ENCODE measurements at regions of chr2 and their contacts with region 1.

Region 1: GRCh38 chr2:211737282-211737681 is 801.3 kb downstream of the ERBB4 start:
- DNase-seq: no peak
- ATAC-seq: no peak
- H3K4me3 ChIP-seq: no peak overlapping the region
- H3K4me3 Mint-ChIP-seq: no peak overlapping the region
- H3K27ac ChIP-seq: no peak overlapping the region
- H3K27ac Mint-ChIP-seq: no peak overlapping the region
- H3K4me1 ChIP-seq: no peaks in the 10 kb centered on the region
- H3K4me1 Mint-ChIP-seq: no peaks in the 10 kb centered on the region
- H3K27me3 ChIP-seq: no peaks in the 10 kb centered on the region
- H3K27me3 Mint-ChIP-seq: no peaks in the 10 kb centered on the region

Region 2: DNA sequence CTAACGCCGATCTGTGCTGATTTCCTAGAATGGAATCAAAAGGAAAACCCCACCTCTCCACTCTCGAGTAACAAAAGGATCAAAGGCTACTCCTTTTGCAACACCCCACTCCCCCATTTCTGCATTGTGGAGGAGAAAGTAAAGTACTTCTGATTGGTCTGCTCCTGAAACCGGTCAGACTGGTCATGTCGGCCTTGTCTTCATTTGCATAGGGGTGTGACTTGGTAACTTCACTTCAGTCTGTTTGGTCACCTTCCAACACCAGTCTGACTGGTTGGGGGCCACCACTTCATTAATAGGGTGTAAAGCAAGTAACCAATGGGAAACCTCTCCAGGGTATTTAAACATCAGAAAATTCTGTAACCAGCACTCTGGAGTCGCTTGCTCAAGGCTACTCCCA is 29.4 kb after region 1 on chr2:
- CTCF ChIA-PET with region 1: no interaction called
- POLR2A ChIA-PET with region 1: no interaction called
- DNase-seq: no peak
- ATAC-seq: no peak
- H3K4me3 ChIP-seq: no peak overlapping the region
- H3K4me3 Mint-ChIP-seq: no peak overlapping the region
- H3K27ac ChIP-seq: no peak overlapping the region
- H3K27ac Mint-ChIP-seq: no peak overlapping the region
- H3K4me1 ChIP-seq: no peaks in the 10 kb centered on the region
- H3K4me1 Mint-ChIP-seq: no peaks in the 10 kb centered on the region
- H3K27me3 ChIP-seq: no peaks in the 10 kb centered on the region
- H3K27me3 Mint-ChIP-seq: no peaks in the 10 kb centered on the region

Region 3: DNA sequence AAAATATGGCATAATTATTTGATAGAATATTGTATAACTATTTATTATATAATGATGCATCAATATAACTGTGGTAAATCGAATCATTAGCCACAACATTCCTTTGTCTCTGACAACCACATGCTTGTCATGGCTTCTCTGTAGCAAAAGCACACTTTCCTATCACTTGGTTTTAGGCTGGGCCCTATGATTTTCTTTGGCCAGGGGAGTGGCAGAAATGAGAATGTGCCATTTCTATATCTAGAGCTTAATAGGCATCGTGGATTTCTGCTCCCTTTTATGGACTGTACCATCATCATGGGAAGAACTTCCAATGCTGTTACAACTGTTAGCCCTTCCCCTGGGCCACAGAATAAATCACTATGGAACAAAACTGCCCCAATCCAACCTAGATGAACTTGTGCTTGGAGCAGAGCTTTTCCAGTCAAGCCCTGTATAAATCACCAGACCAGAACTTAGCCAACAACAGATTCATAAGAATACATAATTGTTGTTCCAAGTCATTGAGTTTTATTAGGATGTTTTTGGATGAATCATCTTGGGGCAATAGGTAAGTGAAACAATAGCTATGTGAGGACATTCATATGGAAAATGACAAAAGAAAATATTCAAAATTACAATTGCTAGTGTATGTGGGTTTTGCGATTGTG is 85.5 kb after region 1 on chr2:
- CTCF ChIA-PET with region 1: no interaction called
- POLR2A ChIA-PET with region 1: no interaction called
- DNase-seq: no peak
- ATAC-seq: no peak
- H3K4me3 ChIP-seq: no peak overlapping the region
- H3K4me3 Mint-ChIP-seq: no peak overlapping the region
- H3K27ac ChIP-seq: no peak overlapping the region
- H3K27ac Mint-ChIP-seq: no peak overlapping the region
- H3K4me1 ChIP-seq: no peaks in the 10 kb centered on the region
- H3K4me1 Mint-ChIP-seq: no peaks in the 10 kb centered on the region
- H3K27me3 ChIP-seq: no peaks in the 10 kb centered on the region
- H3K27me3 Mint-ChIP-seq: no peaks in the 10 kb centered on the region

Region 4: DNA sequence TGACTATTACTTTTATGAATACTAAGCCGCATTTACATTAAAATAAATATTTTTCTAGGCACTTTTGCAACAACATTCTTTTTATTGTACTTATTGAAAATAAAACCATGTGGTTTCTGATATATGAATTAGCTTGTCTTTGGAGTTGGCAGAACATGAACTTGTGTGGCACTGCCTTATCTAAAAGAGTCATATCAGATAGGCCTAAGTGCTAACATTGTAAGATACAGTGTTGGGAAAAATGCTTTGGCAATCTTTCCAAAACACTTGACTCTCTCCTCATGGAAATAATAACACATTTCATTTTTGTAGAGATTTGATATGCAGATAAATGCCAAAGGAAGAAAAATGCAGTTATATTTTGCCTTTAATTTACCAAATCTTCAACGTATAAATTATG is 609.6 kb after region 1 on chr2:
- CTCF ChIA-PET with region 1: interaction called in 1 of 2 experiments, 11 read pairs
- POLR2A ChIA-PET with region 1: no interaction called
- DNase-seq: no peak
- ATAC-seq: no peak
- H3K4me3 ChIP-seq: no peak overlapping the region
- H3K4me3 Mint-ChIP-seq: no peak overlapping the region
- H3K27ac ChIP-seq: no peak overlapping the region
- H3K27ac Mint-ChIP-seq: no peak overlapping the region
- H3K4me1 ChIP-seq: no peaks in the 10 kb centered on the region
- H3K4me1 Mint-ChIP-seq: no peaks in the 10 kb centered on the region
- H3K27me3 ChIP-seq: no peaks in the 10 kb centered on the region
- H3K27me3 Mint-ChIP-seq: no peaks in the 10 kb centered on the region

Measured in T-cell (primary cell).